GM13976 (cell line): ENCODE measurements at regions of chr14 and their contacts with region 1.

Region 1: GRCh38 chr14:68843471-68844209 is 50.8 kb upstream of the ZFP36L1 start:
- DNase-seq: peak; percentile 80
- CTCF ChIP-seq: peak; percentile 91

Region 2: DNA sequence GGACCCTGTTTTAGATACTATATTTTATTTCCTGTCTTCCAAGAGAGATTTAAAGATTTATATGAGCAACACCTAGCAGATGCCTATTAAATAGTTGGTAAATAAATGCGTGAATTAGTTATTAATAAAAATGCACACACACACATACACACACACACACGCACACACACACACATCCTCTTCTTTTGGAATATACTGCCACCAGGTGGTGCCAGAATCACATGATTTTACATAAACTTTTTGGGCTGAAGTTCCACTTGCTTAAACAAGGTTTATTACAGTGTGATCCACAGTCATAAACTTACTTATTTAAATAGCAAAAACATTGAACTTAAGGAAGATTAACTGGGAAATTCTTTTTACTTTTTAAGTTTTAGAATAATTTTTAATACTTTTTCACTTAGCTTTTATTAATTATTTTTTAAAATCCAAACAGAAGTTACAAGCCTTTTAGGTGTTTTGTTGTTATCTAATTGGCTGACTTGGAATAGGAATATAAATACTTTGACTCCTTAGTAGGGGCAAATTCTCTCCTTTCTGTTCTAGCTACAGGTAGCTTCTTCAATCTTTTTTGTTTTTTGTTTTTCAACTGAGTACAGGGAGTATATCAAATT is 1006.5 kb before region 1 on chr14:
- in situ Hi-C with region 1: loop called (anchors 25 kb)
- DNase-seq: no peak
- CTCF ChIP-seq: peak; percentile 68